ENCODE measurements at regions of chr3 and their contacts with region 1.

Region 1: GRCh38 chr3:51498876-51499738 is 708 bp downstream of the DCAF1 start:
- DNase-seq: peak; percentile 61 to 98 (median 80)

Region 2: DNA sequence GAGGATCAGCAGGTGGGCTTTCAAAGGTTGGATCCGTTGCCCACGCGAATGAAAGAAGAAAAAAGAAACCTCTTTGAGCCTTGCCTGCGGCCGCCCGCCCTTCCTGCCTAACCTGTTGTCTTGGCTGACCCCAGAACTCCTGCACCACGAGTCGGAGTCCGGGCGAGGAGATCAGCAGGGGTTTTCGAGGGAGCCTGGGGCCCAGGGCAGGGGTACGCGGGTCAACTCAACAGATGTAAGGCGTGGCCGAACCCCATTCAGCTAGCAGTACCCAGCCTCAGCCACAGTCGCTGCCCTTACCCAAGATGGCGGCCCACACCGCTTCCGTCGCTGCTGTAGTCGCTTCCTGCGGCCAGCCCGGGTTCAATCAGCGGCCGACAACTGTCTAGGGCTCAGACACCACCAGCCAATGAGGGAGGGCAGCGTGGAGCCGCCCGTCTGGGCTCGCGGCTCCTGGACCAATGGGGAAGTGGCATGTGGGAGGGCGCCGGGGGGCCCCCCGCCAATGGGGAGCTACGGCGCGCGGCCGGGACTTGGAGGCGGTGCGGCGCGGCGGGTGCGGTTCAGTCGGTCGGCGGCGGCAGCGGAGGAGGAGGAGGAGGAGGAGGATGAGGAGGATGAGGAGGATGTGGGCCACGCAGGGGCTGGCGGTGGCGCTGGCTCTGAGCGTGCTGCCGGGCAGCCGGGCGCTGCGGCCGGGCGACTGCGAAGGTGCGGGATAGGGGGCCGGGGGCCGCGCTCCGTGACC is 114.2 kb before region 1 on chr3 and contains the start of gene MANF:
- intact Hi-C with region 1: loop called (anchors 5 kb)
- DNase-seq: peak; percentile 94 to 100 (median 98)

Region 3: GRCh38 chr3:51538459-51539290 is 39.6 kb after region 1 on chr3 and contains the start of gene RAD54L2:
- intact Hi-C with region 1: loop called (anchors 2 kb)
- DNase-seq: peak; percentile 77 to 98 (median 84)

Region 4: DNA sequence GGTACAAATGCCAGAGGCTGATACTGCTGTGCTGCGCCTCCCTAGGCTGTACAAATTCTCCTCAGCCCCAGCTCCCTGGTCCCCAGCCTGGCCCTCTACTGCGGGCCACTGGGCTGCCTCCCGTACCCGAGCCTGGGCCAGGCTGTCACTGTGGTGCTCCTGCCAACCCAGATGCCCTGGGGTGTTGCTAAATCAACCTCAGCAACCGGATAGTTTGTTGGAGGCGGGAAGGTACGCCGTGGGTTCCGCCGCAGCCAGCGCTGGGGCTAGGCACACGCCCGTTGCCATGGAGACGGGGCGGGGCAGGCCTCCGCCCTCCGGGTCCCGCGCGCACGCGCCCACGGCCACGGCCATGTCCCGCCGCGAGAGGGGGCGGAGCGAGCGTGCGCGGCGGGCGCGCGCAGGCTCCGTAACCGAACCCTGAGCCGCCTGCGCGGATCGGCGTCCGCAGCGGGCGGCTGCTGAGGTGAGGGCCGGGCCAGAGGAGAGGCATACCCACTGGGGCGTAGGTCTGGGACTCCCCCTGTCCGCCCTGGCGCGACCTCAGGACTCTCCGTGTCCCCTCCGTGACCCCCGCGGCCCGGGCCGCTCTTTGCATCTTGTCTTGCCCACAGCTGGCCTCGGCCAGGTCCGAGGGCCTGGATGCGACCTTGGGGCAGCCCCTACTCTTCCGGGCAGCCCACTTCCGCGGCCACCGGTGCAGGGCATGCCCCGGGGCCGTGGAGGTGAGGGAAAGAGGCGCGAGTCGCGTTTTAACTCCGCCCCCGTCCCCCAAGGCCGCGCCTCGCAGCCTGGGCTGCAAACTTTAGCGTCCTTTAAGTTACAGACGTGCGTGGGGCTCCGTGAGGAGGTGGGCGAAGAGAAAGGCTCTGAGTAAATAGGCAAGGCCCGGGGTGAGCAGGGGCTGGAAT is 172.0 kb after region 1 on chr3 and contains the start of gene TEX264:
- intact Hi-C with region 1: loop called (anchors 1 kb)
- DNase-seq: peak; percentile 72 to 98 (median 84)

Region 5: DNA sequence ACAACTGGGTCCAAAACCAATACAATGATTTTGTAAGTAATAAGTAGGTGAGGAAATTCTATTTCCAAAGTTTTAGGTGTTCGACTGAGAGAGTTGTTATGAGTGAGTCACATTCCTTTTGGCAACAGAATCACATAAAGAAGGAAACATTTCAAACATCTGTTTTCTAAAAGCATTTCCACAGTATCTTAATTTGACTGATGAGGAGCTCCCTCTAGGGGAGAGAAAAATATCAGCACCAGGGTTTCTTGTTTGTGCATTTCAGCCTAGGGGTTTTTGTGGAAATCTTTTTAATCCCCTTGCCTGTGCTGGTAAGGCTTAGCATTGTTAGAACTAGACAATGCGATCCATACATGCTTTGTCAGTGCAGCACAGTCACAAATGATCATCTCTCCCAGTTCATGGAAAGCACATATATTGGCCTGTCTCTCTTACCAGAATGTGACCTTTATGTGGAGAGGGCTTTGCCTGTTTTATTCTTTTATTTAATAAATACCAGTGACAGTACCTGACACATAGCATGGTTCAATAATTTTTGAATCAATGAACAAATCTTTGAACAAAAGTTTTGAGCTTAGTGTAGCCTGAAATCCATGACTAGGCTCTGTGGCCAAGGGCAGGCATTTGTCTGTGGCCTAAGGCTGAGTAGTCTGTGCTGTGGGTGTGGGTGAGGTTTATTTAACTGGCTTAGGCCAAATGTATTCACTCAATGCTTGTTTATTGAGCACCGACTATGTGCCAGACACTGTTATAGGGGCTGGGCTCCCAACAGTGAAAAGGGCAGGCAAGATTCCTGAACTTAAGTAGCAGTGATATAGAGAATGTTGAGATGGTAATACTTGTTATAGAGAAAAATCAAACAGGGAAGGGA is 301.0 kb after region 1 on chr3:
- intact Hi-C with region 1: loop called (anchors 2 kb)
- DNase-seq: no peak

Measured in posterior cingulate gyrus (tissue), 11 donors.